ENCODE measurements at regions of chr1 and their contacts with region 1.

Region 1: GRCh38 chr1:224644553-224645154 is 28.5 kb downstream of the CNIH3 start:
- DNase-seq: peak; percentile 65
- ATAC-seq: peak; percentile 89
- H3K4me3 Mint-ChIP-seq: no peak overlapping the region
- H3K27ac Mint-ChIP-seq: no peak overlapping the region
- H3K4me1 Mint-ChIP-seq: no peaks in the 10 kb centered on the region
- H3K27me3 Mint-ChIP-seq: no peaks in the 10 kb centered on the region
- CTCF ChIP-seq: peak; percentile 83

Region 2: GRCh38 chr1:224632381-224632871 is 12.2 kb before region 1 on chr1:
- CTCF ChIA-PET with region 1: interaction called, 23 read pairs
- POLR2A ChIA-PET with region 1: no interaction called
- intact Hi-C with region 1: no loop called
- DNase-seq: no peak
- ATAC-seq: no peak
- H3K4me3 Mint-ChIP-seq: no peak overlapping the region
- H3K27ac Mint-ChIP-seq: no peak overlapping the region
- H3K4me1 Mint-ChIP-seq: peaks cover 2% of the 10 kb centered on the region
- H3K27me3 Mint-ChIP-seq: peaks cover 4% of the 10 kb centered on the region
- CTCF ChIP-seq: no peak

Region 3: DNA sequence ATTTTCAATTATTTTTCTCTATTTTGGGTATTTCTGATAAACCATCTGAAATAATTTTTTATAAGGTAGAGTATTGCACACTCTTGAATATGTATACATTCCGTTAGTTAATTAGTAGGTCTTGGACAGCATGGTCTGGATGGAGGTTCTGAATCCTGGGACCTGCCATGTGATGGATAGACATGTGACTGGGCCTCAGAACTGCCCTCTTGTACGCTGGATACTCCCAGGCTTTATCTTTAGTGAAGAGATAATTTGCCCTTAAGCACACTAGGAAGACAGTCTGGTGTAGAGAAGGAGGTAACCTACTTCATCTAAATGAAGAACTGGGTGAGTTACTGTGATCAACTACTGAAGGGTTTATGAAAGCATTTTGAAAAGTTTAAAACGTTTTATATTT is 20.4 kb after region 1 on chr1:
- CTCF ChIA-PET with region 1: no interaction called
- POLR2A ChIA-PET with region 1: no interaction called
- intact Hi-C with region 1: no loop called
- DNase-seq: no peak
- ATAC-seq: no peak
- H3K4me3 Mint-ChIP-seq: no peak overlapping the region
- H3K27ac Mint-ChIP-seq: no peak overlapping the region
- H3K4me1 Mint-ChIP-seq: no peaks in the 10 kb centered on the region
- H3K27me3 Mint-ChIP-seq: no peaks in the 10 kb centered on the region
- CTCF ChIP-seq: no peak

Region 4: DNA sequence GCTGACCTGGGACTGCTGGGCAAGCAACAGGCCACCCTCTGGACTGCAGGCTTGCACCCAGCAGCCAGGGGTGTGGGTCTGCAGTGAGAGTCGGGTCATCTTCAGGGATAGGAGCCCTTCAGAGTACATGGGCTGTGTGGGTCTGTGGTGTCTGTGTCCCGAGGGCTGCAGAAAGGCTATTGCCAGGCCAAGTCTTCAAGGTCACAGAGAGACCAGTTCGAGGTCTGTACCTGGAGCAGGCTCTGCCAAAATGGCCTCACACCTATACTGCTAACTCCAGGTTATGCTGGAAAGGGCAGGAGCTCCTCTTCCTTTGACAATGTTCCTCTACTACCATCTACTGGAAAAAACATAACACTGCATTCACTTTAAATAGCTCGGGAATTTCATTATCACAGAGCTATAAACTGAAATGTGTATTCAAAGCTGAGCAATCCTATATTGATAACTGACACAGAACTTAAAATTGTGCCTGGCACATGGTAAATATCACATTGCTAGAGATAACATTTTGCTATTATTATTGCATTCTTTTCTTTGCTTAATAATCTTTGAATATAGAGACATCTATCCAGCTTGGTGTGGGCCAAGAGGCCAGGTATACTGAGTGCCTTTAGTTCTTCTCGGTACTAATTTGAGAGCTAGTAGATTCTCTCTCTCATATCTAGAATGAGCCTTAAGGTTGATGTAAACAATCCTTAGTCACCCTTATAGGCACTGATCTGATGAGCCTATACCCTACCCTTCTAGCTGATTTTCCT is 277.9 kb after region 1 on chr1:
- CTCF ChIA-PET with region 1: interaction called, 11 read pairs
- POLR2A ChIA-PET with region 1: no interaction called
- intact Hi-C with region 1: loop called (anchors 5 kb)
- DNase-seq: no peak
- ATAC-seq: peak; percentile 77
- H3K4me3 Mint-ChIP-seq: no peak overlapping the region
- H3K27ac Mint-ChIP-seq: no peak overlapping the region
- H3K4me1 Mint-ChIP-seq: no peaks in the 10 kb centered on the region
- H3K27me3 Mint-ChIP-seq: peaks cover 10% of the 10 kb centered on the region
- CTCF ChIP-seq: peak; percentile 68

Measured in activated CD8-positive, alpha-beta T cell treated with anti-CD3 and anti-CD28 coated beads for 36 hours (primary cell).